GM13976 (cell line): ENCODE measurements at regions of chr3 and their contacts with region 1.

Region 1: GRCh38 chr3:160343132-160343531 is 55.9 kb downstream of the IFT80 start:
- DNase-seq: peak; percentile 23
- CTCF ChIP-seq: peak; percentile 15

Region 2: GRCh38 chr3:159884661-159885402 is 458.3 kb before region 1 on chr3:
- in situ Hi-C with region 1: loop called (anchors 25 kb)
- DNase-seq: peak; percentile 57
- CTCF ChIP-seq: peak; percentile 29

Region 3: GRCh38 chr3:160038862-160039562 is 304.1 kb before region 1 on chr3:
- in situ Hi-C with region 1: loop called (anchors 10 kb)
- DNase-seq: peak; percentile 46
- CTCF ChIP-seq: no peak

Region 4: GRCh38 chr3:160081968-160082533 is 261.1 kb before region 1 on chr3:
- in situ Hi-C with region 1: no loop called
- DNase-seq: no peak
- CTCF ChIP-seq: no peak

Region 5: GRCh38 chr3:160163229-160163878 is 179.8 kb before region 1 on chr3:
- in situ Hi-C with region 1: loop called (anchors 10 kb)
- DNase-seq: peak; percentile 40
- CTCF ChIP-seq: no peak

Region 6: GRCh38 chr3:160565442-160566403 is 222.6 kb after region 1 on chr3 and contains the start of gene KPNA4:
- in situ Hi-C with region 1: no loop called
- DNase-seq: peak; percentile 98
- CTCF ChIP-seq: no peak

Region 7: DNA sequence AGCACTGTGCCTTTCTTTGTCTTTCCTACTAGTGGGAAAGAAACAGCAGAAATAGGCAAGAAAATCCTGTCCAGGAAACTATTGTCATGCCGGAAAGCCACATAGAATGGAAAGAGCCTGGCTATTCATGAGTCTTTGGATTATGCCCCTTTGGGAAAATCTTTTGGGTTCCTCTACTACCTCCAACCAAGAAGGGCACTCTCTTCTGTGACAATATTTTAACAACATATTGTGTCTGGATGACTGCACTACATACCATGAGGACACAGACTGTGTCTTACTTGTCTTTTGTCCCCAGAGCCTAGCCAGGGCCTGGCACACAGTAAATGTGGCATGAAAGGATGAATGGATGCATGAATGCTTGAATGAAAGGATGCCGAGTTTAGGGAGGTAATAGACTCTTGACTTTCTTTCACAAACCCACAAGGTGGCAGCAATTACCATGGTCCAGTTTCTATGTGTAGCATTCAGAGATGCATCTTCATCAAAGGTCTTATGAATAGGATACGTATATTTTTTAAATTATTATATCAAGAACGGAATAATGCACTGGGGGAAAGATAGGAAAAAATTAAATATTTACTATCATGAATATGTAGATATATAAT is 364.2 kb after region 1 on chr3:
- in situ Hi-C with region 1: no loop called
- DNase-seq: peak; percentile 27
- CTCF ChIP-seq: peak; percentile 31

Region 8: GRCh38 chr3:160801386-160802118 is 458.4 kb after region 1 on chr3:
- in situ Hi-C with region 1: no loop called
- DNase-seq: peak; percentile 44
- CTCF ChIP-seq: no peak